ENCODE measurements at regions of chr5 and their contacts with region 1.

Region 1: GRCh38 chr5:81506900-81507588 is 113.1 kb upstream of the ACOT12 start:
- DNase-seq: peak; percentile 11
- H3K4me3 Mint-ChIP-seq: no peak overlapping the region
- H3K27ac Mint-ChIP-seq: no peak overlapping the region
- H3K4me1 Mint-ChIP-seq: no peaks in the 10 kb centered on the region
- H3K27me3 Mint-ChIP-seq: no peaks in the 10 kb centered on the region

Region 2: GRCh38 chr5:81838307-81838906 is 331.4 kb after region 1 on chr5:
- intact Hi-C with region 1: loop called (anchors 1 kb)
- DNase-seq: no peak
- H3K4me3 Mint-ChIP-seq: no peak overlapping the region
- H3K27ac Mint-ChIP-seq: no peak overlapping the region
- H3K4me1 Mint-ChIP-seq: peaks cover 5% of the 10 kb centered on the region
- H3K27me3 Mint-ChIP-seq: peaks cover 5% of the 10 kb centered on the region

Region 3: GRCh38 chr5:81856948-81857928 is 350.2 kb after region 1 on chr5:
- intact Hi-C with region 1: no loop called
- DNase-seq: no peak
- H3K4me3 Mint-ChIP-seq: no peak overlapping the region
- H3K27ac Mint-ChIP-seq: no peak overlapping the region
- H3K4me1 Mint-ChIP-seq: peaks cover 20% of the 10 kb centered on the region
- H3K27me3 Mint-ChIP-seq: peaks cover 2% of the 10 kb centered on the region

Region 4: DNA sequence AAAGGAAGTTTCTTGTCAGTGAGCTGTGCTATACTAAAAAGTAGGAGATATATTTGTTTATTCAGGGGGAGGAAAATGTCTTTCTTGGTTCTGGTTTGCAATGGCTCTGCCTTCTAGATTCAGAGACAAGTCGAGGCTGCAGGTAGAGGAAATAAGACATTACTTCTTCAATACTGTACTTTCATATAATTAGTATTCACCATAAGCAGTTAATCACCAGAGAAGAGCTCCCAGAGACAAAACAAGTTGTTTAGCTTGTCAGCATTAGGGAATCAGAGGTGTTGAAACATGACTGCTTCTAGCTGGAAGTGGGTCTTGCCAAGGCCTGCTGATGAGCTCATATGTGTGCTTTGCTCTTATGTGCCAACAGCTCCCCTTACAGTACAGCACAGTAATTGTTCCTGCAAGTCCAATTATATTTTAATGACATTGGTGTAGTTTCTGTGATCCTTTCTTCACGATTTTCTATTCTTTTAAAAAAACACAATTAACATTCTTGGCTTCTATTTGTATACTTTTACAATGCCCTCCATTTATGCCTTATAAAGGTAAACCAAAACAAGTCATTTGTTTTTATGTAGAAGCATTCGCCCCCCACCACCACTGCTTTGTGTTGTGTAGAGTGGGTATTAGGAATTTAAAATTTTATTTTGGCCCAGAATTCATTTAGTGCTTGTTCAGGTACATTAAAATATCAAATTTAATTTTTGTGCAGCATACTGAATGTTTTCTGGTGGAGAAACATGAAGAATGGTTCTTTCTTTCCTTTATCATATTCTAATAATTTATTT is 658.9 kb after region 1 on chr5:
- intact Hi-C with region 1: loop called (anchors 1 kb)
- DNase-seq: no peak
- H3K4me3 Mint-ChIP-seq: no peak overlapping the region
- H3K27ac Mint-ChIP-seq: no peak overlapping the region
- H3K4me1 Mint-ChIP-seq: no peaks in the 10 kb centered on the region
- H3K27me3 Mint-ChIP-seq: no peaks in the 10 kb centered on the region

Region 5: GRCh38 chr5:82480331-82480730 is 973.3 kb after region 1 on chr5:
- intact Hi-C with region 1: no loop called
- DNase-seq: no peak
- H3K4me3 Mint-ChIP-seq: no peak overlapping the region
- H3K27ac Mint-ChIP-seq: no peak overlapping the region
- H3K4me1 Mint-ChIP-seq: no peaks in the 10 kb centered on the region
- H3K27me3 Mint-ChIP-seq: peaks cover 11% of the 10 kb centered on the region

Measured in activated T-helper 1 cell treated with anti-CD3 and anti-CD28 coated beads, Interleukin-12 subunit alpha, Interleukin-12 subunit beta, Interleukin-2, Interleukin-4 antibody, amounts not matched to agents 30 ng/mL and 10 ng/mL and 1 ng/mL, durations not matched to agents 14 hours and 24 hours and 36 hours (primary cell).